WTC11 (cell line): ENCODE measurements at regions of chr16 and their contacts with region 1.

Region 1: GRCh38 chr16:70770626-70771552 is 30.1 kb downstream of the VAC14 start:
- DNase-seq: peak; percentile 86
- ATAC-seq: peak; percentile 92
- H3K4me3 Mint-ChIP-seq: no peak overlapping the region
- H3K27ac Mint-ChIP-seq: no peak overlapping the region
- H3K4me1 Mint-ChIP-seq: no peaks in the 10 kb centered on the region
- H3K27me3 Mint-ChIP-seq: no peaks in the 10 kb centered on the region
- CTCF ChIP-seq: peak; percentile 99

Region 2: GRCh38 chr16:70540994-70541393 is 229.9 kb before region 1 on chr16:
- CTCF ChIA-PET with region 1: no interaction called
- POLR2A ChIA-PET with region 1: no interaction called
- DNase-seq: no peak
- ATAC-seq: no peak
- H3K4me3 Mint-ChIP-seq: no peak overlapping the region
- H3K27ac Mint-ChIP-seq: no peak overlapping the region
- H3K4me1 Mint-ChIP-seq: no peaks in the 10 kb centered on the region
- H3K27me3 Mint-ChIP-seq: no peaks in the 10 kb centered on the region
- CTCF ChIP-seq: no peak

Region 3: GRCh38 chr16:70630960-70631745 is 139.7 kb before region 1 on chr16:
- CTCF ChIA-PET with region 1: no interaction called
- POLR2A ChIA-PET with region 1: no interaction called
- DNase-seq: no peak
- ATAC-seq: no peak
- H3K4me3 Mint-ChIP-seq: no peak overlapping the region
- H3K27ac Mint-ChIP-seq: no peak overlapping the region
- H3K4me1 Mint-ChIP-seq: peaks cover 24% of the 10 kb centered on the region
- H3K27me3 Mint-ChIP-seq: no peaks in the 10 kb centered on the region
- CTCF ChIP-seq: no peak

Region 4: GRCh38 chr16:70653809-70654771 is 116.8 kb before region 1 on chr16:
- CTCF ChIA-PET with region 1: interaction called, 23 read pairs
- POLR2A ChIA-PET with region 1: no interaction called
- DNase-seq: peak; percentile 89
- ATAC-seq: peak; percentile 71
- H3K4me3 Mint-ChIP-seq: no peak overlapping the region
- H3K27ac Mint-ChIP-seq: no peak overlapping the region
- H3K4me1 Mint-ChIP-seq: peaks cover 19% of the 10 kb centered on the region
- H3K27me3 Mint-ChIP-seq: no peaks in the 10 kb centered on the region
- CTCF ChIP-seq: peak; percentile 89

Region 5: GRCh38 chr16:70685938-70686375 is 84.9 kb before region 1 on chr16 and contains the start of gene MTSS2:
- CTCF ChIA-PET with region 1: interaction called, 142 read pairs
- POLR2A ChIA-PET with region 1: interaction called, 4 read pairs
- DNase-seq: peak; percentile 82
- ATAC-seq: peak; percentile 55
- H3K4me3 Mint-ChIP-seq: peak within 1 kb of the TSS; percentile 65
- H3K27ac Mint-ChIP-seq: peak within 1 kb of the TSS; percentile 70
- H3K4me1 Mint-ChIP-seq: peaks cover 26% of the 10 kb centered on the region
- H3K27me3 Mint-ChIP-seq: no peaks in the 10 kb centered on the region
- CTCF ChIP-seq: no peak
- total RNA-seq, gene MTSS2: 28.3 to 34.9 TPM (median 31.2 TPM) in 3 replicates

Region 6: GRCh38 chr16:70737377-70738082 is 33.4 kb before region 1 on chr16:
- CTCF ChIA-PET with region 1: interaction called, 36 read pairs
- POLR2A ChIA-PET with region 1: no interaction called
- DNase-seq: no peak
- ATAC-seq: no peak
- H3K4me3 Mint-ChIP-seq: no peak overlapping the region
- H3K27ac Mint-ChIP-seq: no peak overlapping the region; the same call in 1 of the 2 replicates
- H3K4me1 Mint-ChIP-seq: peaks cover 21% of the 10 kb centered on the region
- H3K27me3 Mint-ChIP-seq: no peaks in the 10 kb centered on the region
- CTCF ChIP-seq: no peak

Region 7: DNA sequence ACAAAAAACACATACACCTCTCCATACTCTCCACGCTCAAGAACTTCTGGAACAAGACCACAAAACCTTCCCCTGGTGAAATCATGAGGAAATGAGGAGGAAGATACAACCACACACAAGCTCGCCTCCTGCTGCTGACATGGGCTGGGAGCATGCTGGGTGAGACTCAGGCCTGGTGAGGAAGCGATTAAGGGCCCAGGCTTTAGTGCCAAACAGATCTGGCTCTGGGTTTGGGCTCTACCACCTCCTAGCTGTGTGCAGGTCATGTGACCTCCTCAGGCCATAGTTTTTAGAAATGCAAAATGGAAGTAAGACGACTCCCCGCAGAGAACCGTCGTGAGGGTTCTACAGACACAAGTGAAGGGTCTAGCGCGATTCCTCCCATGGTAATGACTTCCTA is 11.2 kb before region 1 on chr16:
- CTCF ChIA-PET with region 1: interaction called, 20 read pairs
- POLR2A ChIA-PET with region 1: no interaction called
- DNase-seq: no peak
- ATAC-seq: peak; percentile 61
- H3K4me3 Mint-ChIP-seq: no peak overlapping the region
- H3K27ac Mint-ChIP-seq: peak overlapping the region; percentile 57; the same call in 1 of the 2 replicates
- H3K4me1 Mint-ChIP-seq: peaks cover 17% of the 10 kb centered on the region
- H3K27me3 Mint-ChIP-seq: no peaks in the 10 kb centered on the region
- CTCF ChIP-seq: no peak